Posterior cingulate gyrus (tissue), 11 donors: ENCODE measurements at regions of chr10 and their contacts with region 1.

Region 1: DNA sequence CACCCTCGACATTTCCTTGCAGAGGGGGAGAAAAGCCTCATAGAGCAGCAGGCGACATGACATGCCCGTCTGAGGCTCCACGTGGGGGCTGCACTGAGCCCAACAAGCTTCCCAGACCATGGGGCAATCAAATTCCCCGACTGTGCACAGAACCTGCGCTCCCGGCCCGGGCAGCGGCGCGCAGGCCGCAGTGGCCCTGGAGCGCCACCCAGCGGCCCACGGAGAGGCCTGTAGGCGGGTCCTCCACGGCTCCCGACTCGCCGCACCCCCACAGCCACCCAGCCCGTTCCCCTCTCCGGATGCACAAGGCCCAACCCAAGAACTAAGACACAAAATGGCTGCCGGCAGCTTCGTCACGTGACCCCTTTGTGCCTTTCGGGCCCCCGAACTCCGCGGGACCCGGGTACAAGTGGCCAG is 816 bp downstream of the EPC1 start:
- DNase-seq: peak; percentile 89 to 99 (median 95)

Region 2: DNA sequence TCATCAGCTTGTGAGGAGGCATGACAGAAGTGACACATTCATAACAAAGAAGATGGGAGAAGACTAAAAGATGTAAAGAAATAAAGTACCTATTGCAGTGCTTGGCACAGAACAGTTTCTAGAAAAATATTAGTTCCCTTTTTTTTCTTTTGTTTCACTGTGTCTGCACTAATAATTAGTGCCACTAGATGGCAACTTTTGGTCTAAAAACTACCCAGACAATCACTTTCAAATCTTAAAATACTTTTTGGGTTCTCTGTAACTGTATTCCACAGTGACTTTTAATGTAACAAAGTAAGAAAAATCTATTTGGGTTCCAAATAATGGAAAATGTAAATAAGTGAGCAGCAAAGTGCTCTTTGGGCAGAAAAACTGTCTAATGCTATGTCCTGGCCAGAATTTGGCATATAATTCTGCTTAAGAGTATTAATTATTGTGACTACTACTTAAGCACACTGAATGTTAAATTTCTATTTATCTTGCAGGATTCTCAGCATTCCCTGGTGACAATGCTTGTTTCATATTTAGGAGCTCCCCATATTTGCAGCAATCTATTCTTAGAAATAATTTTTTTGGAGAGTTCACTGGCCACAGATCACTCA is 155.2 kb before region 1 on chr10:
- intact Hi-C with region 1: loop called (anchors 1 kb)
- DNase-seq: no peak

Region 3: GRCh38 chr10:32256613-32257437 is 89.3 kb before region 1 on chr10:
- intact Hi-C with region 1: loop called (anchors 1 kb)
- DNase-seq: peak in 7 of 10 donors; percentile 28 to 93 (median 71)

Region 4: GRCh38 chr10:32378363-32379317 is 32.5 kb after region 1 on chr10:
- intact Hi-C with region 1: loop called (anchors 2 kb)
- DNase-seq: peak; percentile 92 to 99 (median 96)

Region 5: GRCh38 chr10:32445740-32446535 is 99.8 kb after region 1 on chr10 and contains the start of gene CCDC7:
- intact Hi-C with region 1: loop called (anchors 2 kb)
- DNase-seq: peak; percentile 63 to 97 (median 79)

Region 6: GRCh38 chr10:33421789-33422462 is 1075.8 kb after region 1 on chr10:
- intact Hi-C with region 1: no loop called
- DNase-seq: no peak